Right ventricle myocardium inferior (tissue), 1 donor: ENCODE measurements at regions of chr4 and their contacts with region 1.

Region 1: GRCh38 chr4:184745831-184746795 is 12.2 kb upstream of the CENPU start:
- DNase-seq: peak; percentile 80
- ATAC-seq: peak; percentile 87

Region 2: DNA sequence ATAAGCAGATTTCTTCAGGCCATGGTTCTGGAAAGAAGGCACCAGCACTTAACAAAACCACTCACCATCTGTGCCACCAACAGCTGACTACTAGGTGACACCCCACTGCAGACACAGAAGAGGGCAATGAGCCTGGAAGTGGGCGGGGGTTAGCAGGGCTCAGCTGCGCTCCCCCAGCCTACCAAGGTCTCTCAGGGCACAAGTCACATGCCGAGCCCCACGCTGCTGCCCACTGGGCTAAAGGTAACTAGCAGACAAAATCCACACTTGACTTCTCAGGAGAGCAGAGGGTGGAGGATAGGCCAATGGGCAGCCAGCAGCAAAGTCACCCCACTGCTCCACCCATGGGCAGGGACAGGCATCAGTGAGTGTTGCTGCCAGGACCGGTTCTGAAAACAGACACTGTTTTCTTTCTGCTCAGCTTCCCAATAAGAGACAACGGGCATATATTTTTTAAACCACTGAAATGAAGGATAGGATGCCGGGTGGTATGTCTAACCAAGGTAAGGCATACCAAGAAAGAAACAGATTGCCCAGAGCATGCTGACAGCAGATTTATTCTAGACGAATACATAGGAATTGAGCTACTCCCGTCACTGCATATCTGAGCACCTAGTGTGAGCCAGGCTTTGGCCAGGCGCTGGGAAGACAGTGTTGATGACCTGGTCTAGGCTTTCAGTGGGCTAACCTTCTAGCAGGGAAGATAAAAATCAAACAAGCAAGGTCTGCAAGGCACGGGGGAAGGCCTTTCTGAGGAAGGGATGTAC is 59.5 kb after region 1 on chr4:
- intact Hi-C with region 1: loop called (anchors 5 kb)
- DNase-seq: peak; percentile 90
- ATAC-seq: peak; percentile 92

Region 3: GRCh38 chr4:184899261-184900134 is 153.4 kb after region 1 on chr4:
- intact Hi-C with region 1: loop called (anchors 10 kb)
- DNase-seq: peak; percentile 75
- ATAC-seq: peak; percentile 69

Region 4: DNA sequence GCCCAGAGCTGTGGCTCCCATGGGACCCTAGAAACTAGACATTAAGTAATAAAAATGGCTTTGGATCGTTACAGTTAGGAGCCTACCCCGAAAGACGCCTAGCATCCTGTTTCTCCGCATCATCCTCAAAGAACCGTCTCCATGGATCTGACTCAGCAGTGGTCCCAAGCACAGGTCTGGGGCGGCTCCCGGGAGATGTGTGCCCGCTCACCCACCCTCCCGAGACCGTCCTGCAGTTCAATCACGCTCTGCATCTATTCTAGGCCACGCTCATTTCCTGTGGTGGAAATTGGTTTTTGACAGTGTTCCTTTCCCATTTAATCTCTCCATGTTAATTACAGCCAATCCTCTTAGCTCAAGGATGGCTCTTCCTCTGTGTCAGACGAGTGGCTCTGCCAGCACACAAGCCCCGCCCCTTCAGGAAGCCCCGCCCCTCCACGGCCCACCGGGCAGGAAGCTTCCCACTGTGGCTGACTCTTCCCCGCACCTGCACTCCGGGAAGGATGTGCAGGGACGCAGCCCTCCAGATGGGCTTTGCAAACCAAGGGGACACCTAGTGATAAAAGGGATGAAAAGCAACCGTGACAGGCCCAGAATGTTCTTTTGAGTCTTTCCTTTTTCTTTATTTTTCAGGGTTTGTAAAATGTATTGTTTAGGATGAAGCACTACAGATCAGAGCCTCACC is 237.7 kb after region 1 on chr4:
- intact Hi-C with region 1: loop called (anchors 2 kb)
- DNase-seq: no peak
- ATAC-seq: peak; percentile 61

Region 5: GRCh38 chr4:185108669-185109068 is 362.6 kb after region 1 on chr4:
- intact Hi-C with region 1: loop called (anchors 10 kb)
- DNase-seq: no peak
- ATAC-seq: no peak

Region 6: DNA sequence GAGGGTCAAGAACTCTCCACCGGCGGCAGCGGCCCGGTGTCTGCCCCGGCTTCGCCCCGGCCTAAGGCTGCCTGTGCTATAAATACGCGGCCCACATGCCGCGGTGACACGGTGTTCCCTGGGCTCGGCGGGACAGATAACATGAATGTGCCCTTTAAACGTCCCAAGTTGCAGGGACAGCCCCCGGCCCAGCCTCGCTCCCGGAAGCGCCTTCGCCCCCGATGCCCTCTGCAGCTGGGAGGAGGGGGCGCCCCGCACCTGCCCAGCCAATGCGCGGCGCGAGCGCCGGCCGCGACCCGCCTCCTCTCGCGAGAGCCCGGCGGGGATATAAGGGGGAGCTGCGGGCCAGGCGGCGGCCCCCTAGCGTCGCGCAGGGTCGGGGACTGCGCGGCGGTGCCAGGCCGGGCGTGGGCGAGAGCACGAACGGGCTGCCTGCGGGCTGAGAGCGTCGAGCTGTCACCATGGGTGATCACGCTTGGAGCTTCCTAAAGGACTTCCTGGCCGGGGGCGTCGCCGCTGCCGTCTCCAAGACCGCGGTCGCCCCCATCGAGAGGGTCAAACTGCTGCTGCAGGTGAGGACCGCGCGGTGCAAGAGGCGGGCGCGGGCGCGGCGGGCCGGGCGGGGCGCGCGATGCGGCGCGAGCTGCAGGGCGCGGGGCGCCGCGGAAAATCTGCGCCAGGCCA is 396.9 kb after region 1 on chr4 and contains the start of gene SLC25A4:
- intact Hi-C with region 1: no loop called
- DNase-seq: peak; percentile 94
- ATAC-seq: peak; percentile 92
- total RNA-seq, gene SLC25A4: 2,233 TPM